Colonic mucosa (tissue), 4 donors: ENCODE measurements at regions of chr16 and their contacts with region 1.

Region 1: GRCh38 chr16:68995011-68995504 is 110.4 kb upstream of the HAS3 start:
- DNase-seq: no peak
- H3K4me3 ChIP-seq: no peak overlapping the region
- H3K27ac ChIP-seq: no peak overlapping the region
- H3K4me1 ChIP-seq: no peaks in the 10 kb centered on the region
- H3K27me3 ChIP-seq: no peaks in the 10 kb centered on the region
- CTCF ChIP-seq: no peak

Region 2: DNA sequence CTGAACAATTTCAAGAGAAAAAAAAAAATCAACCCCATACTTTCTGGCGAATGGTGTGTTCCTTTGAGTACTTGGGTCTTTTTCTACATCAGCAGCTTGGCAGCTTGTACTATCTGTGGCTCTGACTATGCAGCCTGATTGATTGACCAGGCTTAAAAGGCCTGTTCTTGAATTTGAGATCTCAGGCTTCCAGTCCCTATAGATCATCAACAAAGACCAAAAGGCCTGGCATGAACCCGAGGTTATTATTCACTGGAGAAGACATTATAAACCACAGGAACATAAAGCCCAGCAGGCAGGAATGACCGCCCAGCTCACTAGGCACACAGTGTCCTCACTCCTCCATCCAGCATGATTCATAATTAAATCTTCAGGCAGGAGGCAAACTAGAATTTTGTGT is 382.1 kb before region 1 on chr16:
- intact Hi-C with region 1: no loop called
- DNase-seq: no peak
- H3K4me3 ChIP-seq: no peak overlapping the region
- H3K27ac ChIP-seq: no peak overlapping the region
- H3K4me1 ChIP-seq: no peaks in the 10 kb centered on the region
- H3K27me3 ChIP-seq: no peaks in the 10 kb centered on the region
- CTCF ChIP-seq: no peak

Region 3: GRCh38 chr16:69105489-69106361 is 110.7 kb after region 1 on chr16 and contains the start of gene HAS3:
- intact Hi-C with region 1: loop called (anchors 10 kb)
- DNase-seq: peak; percentile 63
- H3K4me3 ChIP-seq: peak within 1 kb of the TSS; percentile 54
- H3K27ac ChIP-seq: no peak within 1 kb of the TSS
- H3K4me1 ChIP-seq: peaks cover 13% of the 10 kb centered on the region
- H3K27me3 ChIP-seq: no peaks in the 10 kb centered on the region
- CTCF ChIP-seq: no peak
- total RNA-seq, gene HAS3: 5.1 to 19.9 TPM